Activated T-helper 2 cell treated with anti-CD3 and anti-CD28 coated beads, Interferon-gamma antibody, Interleukin-2, Interleukin-4, amounts not matched to agents 10 μg/mL and 5 μg/mL and 100 μg/mL, durations not matched to agents 14 hours and 24 hours and 36 hours (primary cell): ENCODE measurements at regions of chr3 and their contacts with region 1.

Region 1: GRCh38 chr3:197002701-197003454 is 26.7 kb downstream of the MELTF start:
- DNase-seq: peak; percentile 74
- H3K4me3 Mint-ChIP-seq: no peak overlapping the region
- H3K27ac Mint-ChIP-seq: no peak overlapping the region
- H3K4me1 Mint-ChIP-seq: peaks cover 7% of the 10 kb centered on the region
- H3K27me3 Mint-ChIP-seq: no peaks in the 10 kb centered on the region

Region 2: GRCh38 chr3:196315821-196316220 is 687.1 kb before region 1 on chr3:
- intact Hi-C with region 1: no loop called
- DNase-seq: no peak
- H3K4me3 Mint-ChIP-seq: no peak overlapping the region
- H3K27ac Mint-ChIP-seq: no peak overlapping the region
- H3K4me1 Mint-ChIP-seq: peaks cover 10% of the 10 kb centered on the region
- H3K27me3 Mint-ChIP-seq: no peaks in the 10 kb centered on the region

Region 3: GRCh38 chr3:197029511-197030167 is 26.8 kb after region 1 on chr3 and contains the start of gene MELTF:
- intact Hi-C with region 1: loop called (anchors 1 kb)
- DNase-seq: peak; percentile 70
- H3K4me3 Mint-ChIP-seq: peak within 1 kb of the TSS; percentile 69
- H3K27ac Mint-ChIP-seq: no peak within 1 kb of the TSS
- H3K4me1 Mint-ChIP-seq: peaks cover 14% of the 10 kb centered on the region
- H3K27me3 Mint-ChIP-seq: no peaks in the 10 kb centered on the region
- total RNA-seq, gene MELTF: 7.2 and 7.6 TPM in 2 replicates

Region 4: DNA sequence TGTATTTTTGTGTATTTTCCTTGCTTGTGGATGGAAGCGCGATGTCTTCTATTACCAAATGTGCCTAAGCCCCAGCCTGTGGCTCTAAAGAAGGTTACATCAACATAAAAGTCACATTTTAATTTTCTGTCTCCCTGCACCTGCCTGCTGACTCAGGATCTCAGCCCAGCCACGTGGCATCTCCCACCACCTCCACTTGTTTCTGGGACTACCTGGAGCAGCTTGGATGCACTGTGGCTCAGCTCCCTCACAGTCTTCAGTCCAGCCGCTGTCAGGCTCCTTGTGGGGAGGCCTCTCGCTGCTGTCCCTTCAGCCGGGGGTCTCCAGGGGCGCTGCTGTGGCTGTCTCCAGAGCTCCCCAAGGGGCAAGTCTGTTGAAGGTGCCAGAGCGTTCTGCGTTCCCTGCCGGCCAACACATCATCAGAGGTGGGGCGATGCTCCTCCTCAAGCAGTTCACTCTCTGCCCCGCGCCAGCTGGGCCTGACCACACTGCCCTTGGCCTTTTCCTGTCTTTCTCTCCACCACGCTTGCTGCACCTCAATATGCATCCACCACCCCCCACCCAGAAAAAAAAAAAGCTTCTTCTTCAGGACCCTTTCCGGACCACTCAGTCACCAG is 600.5 kb after region 1 on chr3:
- intact Hi-C with region 1: no loop called
- DNase-seq: no peak
- H3K4me3 Mint-ChIP-seq: no peak overlapping the region
- H3K27ac Mint-ChIP-seq: no peak overlapping the region
- H3K4me1 Mint-ChIP-seq: peaks cover 4% of the 10 kb centered on the region
- H3K27me3 Mint-ChIP-seq: no peaks in the 10 kb centered on the region